Activated CD8-positive, alpha-beta T cell treated with anti-CD3 and anti-CD28 coated beads, Interleukin-2, amount 10 ng/mL, durations not matched to agents 7 days and 5 days (primary cell): ENCODE measurements at regions of chr6 and their contacts with region 1.

Region 1: GRCh38 chr6:33711140-33712129 is at the start of gene UQCC2:
- DNase-seq: peak; percentile 98
- ATAC-seq: peak; percentile 99
- H3K4me3 Mint-ChIP-seq: peak within 1 kb of the TSS; percentile 96
- H3K27ac Mint-ChIP-seq: peak within 1 kb of the TSS; percentile 98
- H3K4me1 Mint-ChIP-seq: peaks cover 43% of the 10 kb centered on the region
- H3K27me3 Mint-ChIP-seq: peaks cover 7% of the 10 kb centered on the region
- total RNA-seq, gene UQCC2: 88.1 to 89.6 TPM

Region 2: DNA sequence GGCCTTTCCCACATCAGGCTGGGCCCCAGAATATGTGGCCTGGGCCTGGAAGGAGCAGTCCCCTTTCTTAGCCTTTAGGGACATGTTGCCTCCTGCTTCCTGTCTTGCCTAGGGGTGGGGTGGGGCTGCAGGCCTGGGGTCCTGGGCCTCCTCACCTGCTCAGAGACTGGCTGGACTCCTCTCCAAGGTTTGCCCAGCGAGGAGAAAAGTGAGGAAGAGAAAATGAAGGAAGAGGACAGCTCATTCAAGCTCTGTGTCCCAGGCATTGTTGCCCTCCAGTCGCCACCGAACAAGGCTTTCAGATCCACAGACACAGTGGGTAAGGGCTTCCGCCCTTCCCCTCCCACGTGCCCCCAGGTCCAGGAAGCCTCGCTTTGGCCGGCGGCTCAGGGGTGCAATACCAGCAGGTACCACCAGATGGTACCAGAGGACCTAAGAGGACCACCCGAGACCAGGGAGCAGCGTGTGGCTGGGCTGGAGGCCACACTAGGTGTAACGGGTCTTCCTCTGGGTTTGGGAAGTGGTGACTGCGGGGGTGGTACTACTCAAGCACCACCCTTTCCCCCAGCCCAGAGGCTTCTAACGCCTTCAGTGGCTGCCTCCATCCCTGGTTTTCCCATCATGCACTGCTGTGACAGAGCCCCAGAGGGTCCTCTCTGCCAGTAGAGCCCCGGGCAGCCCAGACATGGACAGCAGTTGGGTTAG is 125.9 kb before region 1 on chr6:
- CTCF ChIA-PET with region 1: interaction called, 20 read pairs
- POLR2A ChIA-PET with region 1: interaction called, 6 read pairs
- DNase-seq: peak; percentile 93
- ATAC-seq: peak; percentile 92
- H3K4me3 Mint-ChIP-seq: peak overlapping the region; percentile 78
- H3K27ac Mint-ChIP-seq: peak overlapping the region; percentile 96
- H3K4me1 Mint-ChIP-seq: peaks cover 33% of the 10 kb centered on the region
- H3K27me3 Mint-ChIP-seq: no peaks in the 10 kb centered on the region

Region 3: DNA sequence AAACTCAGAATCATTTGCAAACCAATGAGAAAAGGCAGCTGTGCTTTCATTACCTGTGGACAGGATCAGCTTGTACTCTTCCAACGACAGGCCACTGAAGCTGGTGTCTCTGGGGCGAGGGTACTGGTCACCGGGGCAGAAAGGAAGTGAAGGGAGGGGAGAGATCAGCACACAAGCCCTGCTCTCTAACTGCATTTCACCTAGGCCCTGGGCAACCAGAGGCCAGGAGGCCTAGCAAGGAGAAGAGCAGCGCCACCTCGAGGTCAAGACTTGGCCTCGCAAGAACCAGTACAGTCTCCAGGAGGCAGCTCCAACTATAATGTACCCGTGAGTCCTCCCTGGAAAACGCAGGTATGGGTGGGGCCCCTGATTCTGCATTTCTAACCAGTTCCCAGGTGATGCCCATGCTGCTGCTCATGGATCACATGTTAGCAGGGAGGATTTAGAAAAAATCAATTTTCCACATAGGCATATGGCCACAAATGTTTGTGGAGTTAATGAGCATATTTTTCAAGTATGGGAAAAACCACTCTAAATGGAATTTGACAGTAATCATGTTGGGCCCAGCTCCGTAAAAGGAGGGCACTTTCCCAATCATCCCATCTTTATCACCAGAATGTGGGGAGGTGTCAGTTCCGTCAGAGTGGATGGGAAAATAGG is 10.9 kb before region 1 on chr6:
- CTCF ChIA-PET with region 1: interaction called, 51 read pairs
- POLR2A ChIA-PET with region 1: interaction called, 7 read pairs
- DNase-seq: peak; percentile 87
- ATAC-seq: peak; percentile 76
- H3K4me3 Mint-ChIP-seq: no peak overlapping the region
- H3K27ac Mint-ChIP-seq: peak overlapping the region; percentile 40
- H3K4me1 Mint-ChIP-seq: peaks cover 49% of the 10 kb centered on the region
- H3K27me3 Mint-ChIP-seq: no peaks in the 10 kb centered on the region

Region 4: DNA sequence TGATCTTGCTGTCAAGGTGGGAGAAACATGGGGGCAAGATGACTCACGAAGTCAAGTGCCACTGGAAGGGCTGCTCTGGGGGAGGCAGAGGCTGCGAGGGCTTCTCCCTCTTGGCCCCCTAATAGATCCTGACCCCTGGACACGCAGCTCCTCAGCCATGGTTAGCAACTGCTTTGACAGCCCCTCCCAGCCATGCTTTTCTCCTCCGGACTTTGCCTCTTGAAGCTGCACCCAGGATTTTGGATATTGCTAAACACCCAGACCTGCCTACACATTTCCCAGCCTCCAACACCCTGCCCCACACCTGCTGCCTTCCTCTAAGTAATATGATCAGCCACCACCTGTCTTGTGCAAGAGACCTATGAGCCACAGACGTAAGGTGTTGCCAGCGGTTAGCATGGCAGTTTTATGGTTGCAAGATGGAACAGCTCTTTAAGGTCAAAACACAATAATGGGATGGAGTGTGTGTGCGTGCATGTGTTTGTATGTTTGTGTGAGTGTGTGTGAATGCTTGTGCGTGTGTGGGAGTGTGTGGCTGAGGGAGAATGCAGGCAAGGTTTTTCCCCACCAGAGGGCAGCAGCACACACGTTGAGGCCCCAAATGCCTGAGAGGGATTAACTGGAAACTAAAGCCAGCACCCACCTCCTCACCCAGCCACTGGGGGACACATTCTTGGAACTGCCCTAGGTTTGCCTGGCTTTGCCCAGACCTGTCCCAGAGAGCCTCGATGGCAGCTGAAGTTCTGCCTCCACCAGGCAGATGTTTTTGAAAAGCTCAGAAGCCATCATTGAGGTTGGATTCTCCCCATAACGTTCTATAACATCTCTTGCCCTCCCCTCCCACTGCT is 32.8 kb after region 1 on chr6:
- CTCF ChIA-PET with region 1: interaction called, 21 read pairs
- POLR2A ChIA-PET with region 1: no interaction called
- DNase-seq: peak; percentile 80
- ATAC-seq: peak; percentile 87
- H3K4me3 Mint-ChIP-seq: no peak overlapping the region
- H3K27ac Mint-ChIP-seq: no peak overlapping the region
- H3K4me1 Mint-ChIP-seq: no peaks in the 10 kb centered on the region
- H3K27me3 Mint-ChIP-seq: peaks cover 13% of the 10 kb centered on the region

Region 5: GRCh38 chr6:33771146-33772081 is 60.0 kb after region 1 on chr6:
- CTCF ChIA-PET with region 1: interaction called, 11 read pairs
- POLR2A ChIA-PET with region 1: interaction called, 4 read pairs
- DNase-seq: peak; percentile 69
- ATAC-seq: peak; percentile 75
- H3K4me3 Mint-ChIP-seq: no peak overlapping the region
- H3K27ac Mint-ChIP-seq: no peak overlapping the region
- H3K4me1 Mint-ChIP-seq: peaks cover 3% of the 10 kb centered on the region
- H3K27me3 Mint-ChIP-seq: peaks cover 3% of the 10 kb centered on the region

Region 6: DNA sequence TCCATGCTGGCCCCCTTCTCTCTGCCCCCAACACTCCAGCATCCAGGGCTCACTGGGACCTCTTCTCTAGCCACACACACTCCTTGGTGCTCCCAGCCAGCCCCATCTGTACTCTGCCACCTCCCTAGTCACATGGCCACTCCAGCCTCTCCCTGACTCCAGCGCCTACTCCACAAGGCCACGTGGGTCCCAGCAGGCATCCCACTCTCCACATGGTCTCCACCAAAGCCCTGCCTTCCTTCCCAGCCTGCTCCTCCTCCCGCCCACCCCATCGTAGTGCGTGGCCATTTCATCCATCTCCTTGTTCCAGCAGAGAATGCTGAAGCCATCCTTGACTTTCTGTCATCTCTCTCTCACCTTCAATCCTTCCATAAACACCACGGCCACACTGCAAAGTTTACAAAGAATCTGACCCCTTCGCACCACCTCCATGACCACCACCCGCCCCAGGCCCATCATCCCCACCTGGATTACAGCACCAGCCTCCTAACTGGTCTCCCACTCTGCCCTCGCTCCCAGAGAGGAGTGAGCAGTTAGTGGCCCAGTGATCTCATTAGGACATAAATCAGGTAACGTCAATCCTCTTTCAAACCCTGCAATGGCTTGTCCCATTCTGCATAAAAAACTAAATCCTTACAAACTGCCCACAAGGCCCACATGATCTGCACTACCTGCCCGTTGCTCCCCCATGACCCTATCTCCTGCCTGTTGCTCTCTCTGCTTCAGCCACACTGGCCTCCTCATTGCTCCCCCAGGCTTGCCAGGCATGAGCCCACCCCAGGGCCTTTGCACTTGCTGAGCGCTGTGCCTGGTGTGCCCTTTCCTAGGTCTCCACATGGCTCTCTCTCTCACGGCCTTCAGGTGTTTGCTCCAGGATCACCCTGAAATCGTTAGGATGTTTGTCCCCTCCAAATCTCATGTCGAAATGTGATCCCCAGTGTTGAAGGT is 338.2 kb after region 1 on chr6:
- CTCF ChIA-PET with region 1: no interaction called
- POLR2A ChIA-PET with region 1: no interaction called
- DNase-seq: no peak
- ATAC-seq: no peak
- H3K4me3 Mint-ChIP-seq: no peak overlapping the region
- H3K27ac Mint-ChIP-seq: no peak overlapping the region
- H3K4me1 Mint-ChIP-seq: peaks cover 6% of the 10 kb centered on the region
- H3K27me3 Mint-ChIP-seq: peaks cover 19% of the 10 kb centered on the region

Region 7: GRCh38 chr6:34656378-34657036 is 945.1 kb after region 1 on chr6:
- CTCF ChIA-PET with region 1: no interaction called
- POLR2A ChIA-PET with region 1: no interaction called
- DNase-seq: peak; percentile 41
- ATAC-seq: peak; percentile 72
- H3K4me3 Mint-ChIP-seq: peak overlapping the region; percentile 76
- H3K27ac Mint-ChIP-seq: peak overlapping the region; percentile 90
- H3K4me1 Mint-ChIP-seq: peaks cover 42% of the 10 kb centered on the region
- H3K27me3 Mint-ChIP-seq: no peaks in the 10 kb centered on the region